MCF 10A (cell line): ENCODE measurements at regions of chr16 and their contacts with region 1.

Region 1: DNA sequence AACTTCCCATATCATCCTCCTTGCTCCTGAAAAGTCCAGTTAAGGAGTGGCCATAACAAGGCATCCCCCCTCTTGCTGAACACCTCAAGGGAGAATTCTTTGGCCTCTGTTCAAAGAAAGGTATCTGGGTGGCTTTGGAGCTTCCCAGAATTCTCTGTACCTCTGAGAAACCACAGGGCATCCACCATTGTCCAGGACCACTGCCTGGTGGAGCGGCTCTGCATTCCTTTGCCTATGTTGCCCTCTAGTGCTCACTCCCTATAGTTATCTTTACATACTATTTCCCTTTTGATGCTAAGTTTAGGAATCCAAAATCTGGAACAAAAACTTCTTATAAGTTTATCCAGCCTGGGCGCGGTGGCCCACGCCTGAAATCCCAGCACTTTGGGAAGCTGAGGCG is 30.3 kb downstream of the CHD9NB start:
- DNase-seq: peak; percentile 65
- H3K4me3 Mint-ChIP-seq: no peak overlapping the region
- H3K27ac Mint-ChIP-seq: no peak overlapping the region
- H3K4me1 Mint-ChIP-seq: peaks cover 7% of the 10 kb centered on the region
- H3K27me3 Mint-ChIP-seq: no peaks in the 10 kb centered on the region
- CTCF ChIP-seq: peak; percentile 74

Region 2: DNA sequence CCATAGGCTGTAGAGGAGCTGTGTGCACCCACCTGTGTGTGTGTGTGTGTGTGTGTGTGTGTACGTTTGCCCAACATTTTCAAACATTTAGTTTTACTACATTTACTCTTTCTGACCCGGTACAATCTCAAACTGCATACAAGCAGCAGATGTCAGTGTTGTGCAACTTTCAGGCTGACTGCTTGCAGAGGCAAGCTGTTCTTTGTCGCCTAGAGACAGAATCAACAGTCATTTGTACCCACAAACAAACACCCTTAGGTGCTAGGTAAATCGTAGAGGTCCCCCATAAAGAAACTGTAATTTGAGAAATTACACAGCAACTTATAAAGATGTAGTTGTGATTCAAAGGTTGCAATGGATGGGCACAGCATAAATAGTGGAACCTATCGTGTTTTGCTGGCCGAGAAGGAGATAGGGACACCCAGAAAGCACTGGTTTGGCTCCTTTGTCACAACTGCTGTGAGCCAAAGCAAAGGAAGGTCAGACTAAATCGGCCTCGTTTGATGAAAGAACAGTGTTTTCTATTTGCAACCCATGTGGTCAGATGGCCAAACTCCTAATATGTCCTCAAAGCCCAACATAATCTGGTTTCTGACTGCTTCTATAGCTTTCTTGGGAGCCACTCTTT is 953.8 kb before region 1 on chr16:
- CTCF ChIA-PET with region 1: interaction called, 29 read pairs
- POLR2A ChIA-PET with region 1: no interaction called
- intact Hi-C with region 1: loop called (anchors 1 kb)
- DNase-seq: peak; percentile 31
- H3K4me3 Mint-ChIP-seq: no peak overlapping the region
- H3K27ac Mint-ChIP-seq: no peak overlapping the region
- H3K4me1 Mint-ChIP-seq: no peaks in the 10 kb centered on the region
- H3K27me3 Mint-ChIP-seq: peaks cover 88% of the 10 kb centered on the region
- CTCF ChIP-seq: peak; percentile 12

Region 3: DNA sequence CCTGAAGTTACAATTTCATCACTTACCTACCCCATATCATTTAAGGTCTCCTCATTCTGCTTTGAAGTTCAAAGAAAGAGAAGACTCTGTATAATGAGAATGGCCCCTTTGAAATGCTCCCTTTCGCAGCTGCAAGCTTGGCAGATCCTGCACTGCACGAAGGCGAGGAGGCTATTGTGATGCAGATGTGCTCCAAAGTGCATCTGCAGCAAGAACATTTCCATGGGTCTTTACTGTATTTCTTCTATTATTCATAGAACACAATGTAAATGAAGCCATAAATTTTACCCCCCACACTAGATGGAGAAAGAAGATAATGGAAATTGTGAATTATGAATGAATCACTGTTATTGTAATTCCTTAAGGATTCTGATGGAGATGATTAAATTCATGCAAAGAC is 148.3 kb before region 1 on chr16:
- CTCF ChIA-PET with region 1: interaction called, 4 read pairs
- POLR2A ChIA-PET with region 1: no interaction called
- intact Hi-C with region 1: loop called (anchors 10 kb)
- DNase-seq: no peak
- H3K4me3 Mint-ChIP-seq: no peak overlapping the region
- H3K27ac Mint-ChIP-seq: no peak overlapping the region
- H3K4me1 Mint-ChIP-seq: no peaks in the 10 kb centered on the region
- H3K27me3 Mint-ChIP-seq: peaks cover 12% of the 10 kb centered on the region
- CTCF ChIP-seq: no peak

Region 4: GRCh38 chr16:52976539-52977167 is 45.7 kb before region 1 on chr16:
- CTCF ChIA-PET with region 1: interaction called, 11 read pairs
- POLR2A ChIA-PET with region 1: interaction called, 5 read pairs
- intact Hi-C with region 1: loop called (anchors 2 kb)
- DNase-seq: peak; percentile 60
- H3K4me3 Mint-ChIP-seq: no peak overlapping the region
- H3K27ac Mint-ChIP-seq: no peak overlapping the region
- H3K4me1 Mint-ChIP-seq: no peaks in the 10 kb centered on the region
- H3K27me3 Mint-ChIP-seq: peaks cover 14% of the 10 kb centered on the region
- CTCF ChIP-seq: peak; percentile 19